ENCODE measurements at regions of chr4 and their contacts with region 1.

Region 1: GRCh38 chr4:1726146-1726934 is 5.0 kb downstream of the TACC3 start:
- DNase-seq: peak; percentile 89
- H3K4me3 Mint-ChIP-seq: peak overlapping the region; percentile 57
- H3K27ac Mint-ChIP-seq: peak overlapping the region; percentile 94
- H3K4me1 Mint-ChIP-seq: peaks cover 56% of the 10 kb centered on the region
- H3K27me3 Mint-ChIP-seq: no peaks in the 10 kb centered on the region
- CTCF ChIP-seq: peak; percentile 90

Region 2: GRCh38 chr4:1492651-1493537 is 233.4 kb before region 1 on chr4:
- CTCF ChIA-PET with region 1: no interaction called
- intact Hi-C with region 1: no loop called
- DNase-seq: no peak
- H3K4me3 Mint-ChIP-seq: no peak overlapping the region
- H3K27ac Mint-ChIP-seq: no peak overlapping the region
- H3K4me1 Mint-ChIP-seq: no peaks in the 10 kb centered on the region
- H3K27me3 Mint-ChIP-seq: peaks cover 25% of the 10 kb centered on the region
- CTCF ChIP-seq: no peak

Region 3: GRCh38 chr4:1693129-1693896 is 33.0 kb before region 1 on chr4:
- CTCF ChIA-PET with region 1: interaction called, 21 read pairs
- intact Hi-C with region 1: no loop called
- DNase-seq: peak; percentile 73
- H3K4me3 Mint-ChIP-seq: no peak overlapping the region
- H3K27ac Mint-ChIP-seq: no peak overlapping the region
- H3K4me1 Mint-ChIP-seq: no peaks in the 10 kb centered on the region
- H3K27me3 Mint-ChIP-seq: no peaks in the 10 kb centered on the region
- CTCF ChIP-seq: peak; percentile 75